Activated B cell treated with CpG ODN at 0.5 μM for 24 hours (primary cell): ENCODE measurements at regions of chr10 and their contacts with region 1.

Region 1: DNA sequence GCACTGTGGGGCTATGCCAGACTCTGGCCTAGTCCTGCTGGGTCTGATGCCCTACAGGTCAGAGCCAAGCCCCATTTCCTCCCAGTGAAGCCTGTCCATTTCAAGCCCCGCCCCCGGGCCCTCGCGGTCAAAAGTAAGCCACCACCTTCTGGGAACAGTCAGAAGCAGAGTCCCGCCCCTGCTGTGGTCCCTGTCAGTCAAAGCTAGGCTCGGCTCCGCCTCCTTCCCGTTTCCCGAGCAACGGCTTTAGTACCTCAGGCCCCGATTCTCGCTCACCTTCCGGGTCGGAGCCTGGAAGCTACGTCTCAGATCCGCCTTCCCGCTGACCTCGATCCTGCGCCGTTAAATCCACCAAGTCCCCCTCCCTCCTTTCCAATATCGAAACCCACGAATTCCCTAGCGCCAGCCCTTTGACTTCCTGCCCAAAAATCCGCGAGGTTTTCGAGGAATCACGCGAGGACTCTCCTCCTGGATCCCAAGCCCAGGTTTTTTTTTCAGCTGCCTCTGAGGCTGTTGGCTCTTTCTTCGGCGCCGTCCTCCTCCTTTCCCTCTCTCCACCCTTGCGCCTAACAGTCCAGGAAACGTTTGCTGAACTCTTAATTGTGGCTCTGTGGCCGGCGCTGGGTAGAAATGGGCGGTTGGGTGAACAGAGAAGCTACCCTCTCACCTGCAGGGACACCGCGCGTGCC is 11.8 kb downstream of the SFXN3 start:
- DNase-seq: peak; percentile 78
- ATAC-seq: peak; percentile 91
- H3K4me3 Mint-ChIP-seq: peak overlapping the region; percentile 99
- H3K27ac Mint-ChIP-seq: peak overlapping the region; percentile 93
- H3K4me1 Mint-ChIP-seq: peaks cover 13% of the 10 kb centered on the region
- H3K27me3 Mint-ChIP-seq: peaks cover 14% of the 10 kb centered on the region
- CTCF ChIP-seq: no peak

Region 2: GRCh38 chr10:100625816-100626215 is 417.0 kb before region 1 on chr10:
- CTCF ChIA-PET with region 1: no interaction called
- POLR2A ChIA-PET with region 1: no interaction called
- intact Hi-C with region 1: no loop called
- DNase-seq: no peak
- ATAC-seq: no peak
- H3K4me3 Mint-ChIP-seq: no peak overlapping the region
- H3K27ac Mint-ChIP-seq: no peak overlapping the region
- H3K4me1 Mint-ChIP-seq: no peaks in the 10 kb centered on the region
- H3K27me3 Mint-ChIP-seq: peaks cover 45% of the 10 kb centered on the region
- CTCF ChIP-seq: no peak

Region 3: GRCh38 chr10:100969187-100970075 is 73.4 kb before region 1 on chr10 and contains the start of gene SEMA4G:
- CTCF ChIA-PET with region 1: no interaction called
- POLR2A ChIA-PET with region 1: no interaction called
- intact Hi-C with region 1: no loop called
- DNase-seq: peak; percentile 58
- ATAC-seq: peak; percentile 88
- H3K4me3 Mint-ChIP-seq: peak within 1 kb of the TSS; percentile 64
- H3K27ac Mint-ChIP-seq: no peak within 1 kb of the TSS
- H3K4me1 Mint-ChIP-seq: peaks cover 11% of the 10 kb centered on the region
- H3K27me3 Mint-ChIP-seq: no peaks in the 10 kb centered on the region
- CTCF ChIP-seq: no peak
- total RNA-seq, gene SEMA4G: 0.60 and 0.78 TPM in 2 replicates

Region 4: GRCh38 chr10:101007099-101007711 is 35.6 kb before region 1 on chr10:
- CTCF ChIA-PET with region 1: no interaction called
- POLR2A ChIA-PET with region 1: no interaction called
- intact Hi-C with region 1: no loop called
- DNase-seq: no peak
- ATAC-seq: no peak
- H3K4me3 Mint-ChIP-seq: no peak overlapping the region
- H3K27ac Mint-ChIP-seq: no peak overlapping the region
- H3K4me1 Mint-ChIP-seq: no peaks in the 10 kb centered on the region
- H3K27me3 Mint-ChIP-seq: no peaks in the 10 kb centered on the region
- CTCF ChIP-seq: no peak

Region 5: GRCh38 chr10:101031128-101031795 is 11.5 kb before region 1 on chr10 and contains the starts of genes PDZD7 and SFXN3:
- CTCF ChIA-PET with region 1: interaction called, 24 read pairs
- POLR2A ChIA-PET with region 1: interaction called, 18 read pairs
- intact Hi-C with region 1: loop called (anchors 1 kb)
- DNase-seq: peak; percentile 93
- ATAC-seq: peak; percentile 91
- H3K4me3 Mint-ChIP-seq: peak within 1 kb of the TSS; percentile 92
- H3K27ac Mint-ChIP-seq: peak within 1 kb of the TSS; percentile 69
- H3K4me1 Mint-ChIP-seq: peaks cover 20% of the 10 kb centered on the region
- H3K27me3 Mint-ChIP-seq: peaks cover 19% of the 10 kb centered on the region
- CTCF ChIP-seq: no peak
- total RNA-seq, gene PDZD7: 0.11 TPM in 1 of 2 replicates, not detected in the other
- total RNA-seq, gene SFXN3: 9.5 and 9.8 TPM in 2 replicates

Region 6: DNA sequence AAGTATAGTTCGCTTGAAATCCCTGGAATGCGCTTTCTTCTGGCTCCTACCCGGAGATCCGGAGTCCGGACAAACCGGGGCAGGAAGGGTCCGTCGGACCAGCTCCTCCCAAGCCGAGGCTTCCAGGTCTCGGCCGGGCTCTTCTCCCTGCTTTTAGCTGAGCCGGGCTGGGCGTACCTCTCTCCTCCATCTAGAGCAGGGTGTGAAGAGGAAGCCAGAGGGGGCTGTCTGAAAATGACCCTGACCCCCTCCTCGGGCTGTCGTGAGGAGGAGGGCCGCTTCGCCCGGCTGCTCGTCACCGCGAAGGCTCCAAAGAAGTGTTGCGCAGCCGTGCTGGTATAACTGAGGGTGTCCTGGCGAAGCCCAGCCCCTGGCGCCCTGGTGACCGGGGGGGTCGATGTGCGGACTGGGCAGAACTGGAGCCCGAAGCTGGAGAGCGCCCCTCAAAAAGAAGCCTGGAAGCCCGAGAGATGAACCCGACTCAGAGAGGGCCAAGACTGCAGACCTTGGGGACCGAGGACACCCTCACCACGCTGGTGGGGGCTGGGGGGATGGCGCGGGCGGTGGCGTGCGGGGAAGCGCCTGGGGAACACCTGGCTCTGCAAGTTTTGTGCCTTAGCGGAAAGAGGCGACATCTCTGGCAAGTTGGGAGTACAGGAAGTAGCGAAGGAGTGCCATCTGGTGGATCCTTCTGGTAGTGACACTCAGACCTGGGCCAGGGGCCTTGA is 24.7 kb after region 1 on chr10:
- CTCF ChIA-PET with region 1: interaction called, 57 read pairs
- POLR2A ChIA-PET with region 1: interaction called, 14 read pairs
- intact Hi-C with region 1: loop called (anchors 1 kb)
- DNase-seq: peak; percentile 63
- ATAC-seq: peak; percentile 64
- H3K4me3 Mint-ChIP-seq: peak overlapping the region; percentile 92
- H3K27ac Mint-ChIP-seq: no peak overlapping the region
- H3K4me1 Mint-ChIP-seq: peaks cover 51% of the 10 kb centered on the region
- H3K27me3 Mint-ChIP-seq: peaks cover 8% of the 10 kb centered on the region
- CTCF ChIP-seq: peak; percentile 76

Region 7: GRCh38 chr10:101141616-101142532 is 99.1 kb after region 1 on chr10:
- CTCF ChIA-PET with region 1: interaction called, 58 read pairs
- POLR2A ChIA-PET with region 1: interaction called, 8 read pairs
- intact Hi-C with region 1: loop called (anchors 1 kb)
- DNase-seq: peak; percentile 75
- ATAC-seq: peak; percentile 92
- H3K4me3 Mint-ChIP-seq: no peak overlapping the region
- H3K27ac Mint-ChIP-seq: no peak overlapping the region
- H3K4me1 Mint-ChIP-seq: peaks cover 23% of the 10 kb centered on the region
- H3K27me3 Mint-ChIP-seq: peaks cover 75% of the 10 kb centered on the region
- CTCF ChIP-seq: no peak

Region 8: DNA sequence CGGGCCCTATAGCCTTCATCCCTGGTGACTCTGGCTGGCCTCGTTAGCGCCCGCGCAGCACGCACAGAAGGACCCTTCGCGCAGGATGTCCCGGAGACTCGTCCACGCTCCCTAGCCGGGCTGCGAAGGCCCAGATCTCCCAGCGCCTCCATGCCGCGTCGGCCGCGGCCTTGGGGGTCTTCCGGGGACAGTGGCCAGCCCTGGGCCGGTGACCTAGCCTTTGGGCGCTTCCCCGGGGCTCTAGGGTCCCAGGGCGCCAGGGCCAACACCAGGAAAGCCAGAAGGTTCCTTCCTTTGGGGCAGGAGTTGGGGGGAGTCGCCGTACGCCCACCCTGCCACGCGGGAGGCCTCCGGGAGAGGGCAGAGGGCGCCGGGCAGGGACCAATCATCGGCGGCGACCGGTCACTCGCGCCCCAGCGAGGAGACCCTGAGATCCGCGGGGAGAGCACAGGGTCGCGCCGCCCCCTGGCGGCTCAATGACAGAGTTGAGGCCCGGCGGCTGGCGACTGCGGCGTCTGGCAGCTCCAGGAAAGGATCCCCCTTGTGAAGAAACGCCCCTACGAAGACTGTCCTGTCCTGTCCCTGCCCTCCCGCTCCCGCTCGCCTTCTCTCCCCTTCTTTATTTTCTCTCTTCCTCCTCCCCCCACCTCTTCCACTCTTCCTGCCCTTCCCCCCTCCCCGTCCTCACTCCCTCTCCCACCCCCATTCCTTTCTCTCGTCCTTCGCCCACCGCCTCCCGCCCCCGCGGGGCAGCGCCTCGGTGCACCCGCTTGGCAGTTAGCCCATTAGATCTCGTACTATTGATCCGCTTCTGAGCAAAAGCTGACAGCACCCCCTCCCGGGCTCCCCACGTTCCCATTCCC is 248.8 kb after region 1 on chr10:
- CTCF ChIA-PET with region 1: no interaction called
- POLR2A ChIA-PET with region 1: no interaction called
- intact Hi-C with region 1: loop called (anchors 5 kb)
- DNase-seq: peak; percentile 34
- ATAC-seq: peak; percentile 71
- H3K4me3 Mint-ChIP-seq: peak overlapping the region; percentile 79
- H3K27ac Mint-ChIP-seq: no peak overlapping the region
- H3K4me1 Mint-ChIP-seq: peaks cover 13% of the 10 kb centered on the region
- H3K27me3 Mint-ChIP-seq: peaks cover 64% of the 10 kb centered on the region
- CTCF ChIP-seq: no peak

Region 9: GRCh38 chr10:101467286-101467770 is 424.5 kb after region 1 on chr10:
- CTCF ChIA-PET with region 1: no interaction called
- POLR2A ChIA-PET with region 1: no interaction called
- intact Hi-C with region 1: no loop called
- DNase-seq: no peak
- ATAC-seq: peak; percentile 78
- H3K4me3 Mint-ChIP-seq: no peak overlapping the region
- H3K27ac Mint-ChIP-seq: no peak overlapping the region
- H3K4me1 Mint-ChIP-seq: peaks cover 7% of the 10 kb centered on the region
- H3K27me3 Mint-ChIP-seq: no peaks in the 10 kb centered on the region
- CTCF ChIP-seq: peak; percentile 94

Region 10: GRCh38 chr10:102055647-102056419 is 1013.0 kb after region 1 on chr10 and contains the start of gene ARMH3:
- CTCF ChIA-PET with region 1: no interaction called
- POLR2A ChIA-PET with region 1: interaction called, 11 read pairs
- intact Hi-C with region 1: no loop called
- DNase-seq: peak; percentile 83
- ATAC-seq: peak; percentile 93
- H3K4me3 Mint-ChIP-seq: peak within 1 kb of the TSS; percentile 94
- H3K27ac Mint-ChIP-seq: peak within 1 kb of the TSS; percentile 91
- H3K4me1 Mint-ChIP-seq: peaks cover 45% of the 10 kb centered on the region
- H3K27me3 Mint-ChIP-seq: no peaks in the 10 kb centered on the region
- CTCF ChIP-seq: no peak
- total RNA-seq, gene ARMH3: 26.8 and 35.4 TPM in 2 replicates